ENCODE measurements at regions of chr1 and their contacts with region 1.

Region 1: GRCh38 chr1:110619412-110620249 is 13.5 kb upstream of the KCNA2 start:
- DNase-seq: peak; percentile 92
- ATAC-seq: peak; percentile 85

Region 2: GRCh38 chr1:110524311-110525251 is 95.0 kb before region 1 on chr1:
- intact Hi-C with region 1: loop called (anchors 2 kb)
- DNase-seq: no peak
- ATAC-seq: peak; percentile 55

Region 3: GRCh38 chr1:110554871-110555801 is 64.5 kb before region 1 on chr1:
- intact Hi-C with region 1: loop called (anchors 1 kb)
- DNase-seq: peak; percentile 78
- ATAC-seq: peak; percentile 85

Region 4: GRCh38 chr1:110570307-110570706 is 49.3 kb before region 1 on chr1:
- intact Hi-C with region 1: no loop called
- DNase-seq: no peak
- ATAC-seq: no peak

Region 5: DNA sequence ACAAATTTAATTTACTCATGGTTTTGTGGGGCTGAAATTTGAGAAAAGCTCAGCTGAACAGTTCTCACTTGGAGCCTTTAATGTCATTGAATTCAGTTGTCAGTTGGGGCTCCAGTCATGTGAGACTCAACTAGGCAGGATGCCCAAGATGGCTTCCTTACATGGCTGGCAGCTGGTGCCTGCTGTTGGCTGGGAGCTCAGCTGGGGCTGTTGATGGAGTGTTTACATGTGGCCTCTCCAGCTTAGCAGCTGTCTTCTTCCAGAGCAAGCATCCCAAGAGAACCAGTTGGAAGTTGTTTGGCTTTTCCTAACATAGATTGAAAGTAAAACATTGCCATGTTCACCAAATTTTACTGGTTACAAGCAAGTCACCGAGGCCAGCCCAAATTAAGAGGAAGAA is 136.9 kb after region 1 on chr1:
- intact Hi-C with region 1: no loop called
- DNase-seq: peak; percentile 71
- ATAC-seq: peak; percentile 91